Heart right ventricle (tissue), 16 donors: ENCODE measurements at regions of chr10 and their contacts with region 1.

Region 1: GRCh38 chr10:125060826-125061556 is 99.4 kb downstream of the CTBP2 start:
- DNase-seq: peak; percentile 84 to 86
- ATAC-seq: peak; percentile 51 to 77 (median 68)
- H3K4me3 ChIP-seq: peak overlapping the region in 7 of 10 donors; percentile 4 to 36 (median 29)
- H3K27ac ChIP-seq: peak overlapping the region; percentile 2 to 92 (median 70)
- H3K4me1 ChIP-seq: peaks cover 65 to 100% (median 100%) of the 10 kb centered on the region in 9 donors
- H3K27me3 ChIP-seq: no peaks in the 10 kb centered on the region
- CTCF ChIP-seq: peak; percentile 73 to 94 (median 84)

Region 2: DNA sequence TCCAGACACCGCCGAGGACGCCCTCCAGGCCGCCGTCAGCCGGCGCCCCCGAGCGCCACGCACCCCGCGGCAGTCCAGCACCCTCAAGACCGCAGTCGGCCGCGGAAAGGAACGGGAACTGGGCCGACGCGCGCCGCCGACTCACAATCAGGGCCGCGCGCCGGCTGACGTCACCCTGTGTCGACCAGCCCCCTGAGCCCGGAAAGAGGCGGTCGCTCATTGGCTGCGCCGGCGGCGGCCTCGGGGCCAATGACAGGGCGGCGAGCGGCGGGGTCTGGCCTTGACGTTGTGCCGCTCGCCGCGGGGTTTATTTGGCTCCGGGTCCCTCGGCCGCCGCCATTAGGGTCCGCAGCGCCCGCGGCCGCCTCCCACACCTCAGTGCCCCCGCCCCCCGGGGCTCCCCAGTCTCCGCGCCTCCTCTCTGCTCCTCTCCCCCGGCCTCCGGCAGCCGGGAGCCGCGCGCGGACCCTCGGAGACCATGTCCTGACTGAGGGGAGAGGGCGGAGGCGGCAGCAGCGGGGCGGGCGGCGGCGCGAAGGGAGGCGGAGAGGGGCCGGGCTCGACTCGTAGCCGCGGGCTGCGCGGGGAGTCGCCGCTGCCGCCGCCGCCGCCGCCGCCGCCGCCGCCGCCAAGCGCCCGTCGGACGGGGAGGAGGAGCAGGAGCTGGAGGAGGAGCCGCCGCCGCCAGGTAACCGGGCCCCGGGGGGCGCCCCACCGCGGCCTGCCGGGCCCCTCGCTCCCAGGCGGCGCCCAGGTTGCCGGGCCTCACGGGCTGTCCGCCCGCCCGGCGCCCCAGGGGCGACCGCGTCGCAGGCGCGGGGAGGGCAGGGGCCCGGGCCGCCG is 144.2 kb before region 1 on chr10:
- intact Hi-C with region 1: loop called in 1 of 10 experiments (anchors 10 kb)
- DNase-seq: peak; percentile 98 to 99
- ATAC-seq: peak; percentile 98 to 99 (median 99)
- H3K4me3 ChIP-seq: peak overlapping the region; percentile 74 to 92 (median 86)
- H3K27ac ChIP-seq: peak overlapping the region; percentile 86 to 99 (median 96)
- H3K4me1 ChIP-seq: peaks cover 7 to 55% (median 46%) of the 10 kb centered on the region in 9 donors
- H3K27me3 ChIP-seq: no peaks in the 10 kb centered on the region
- CTCF ChIP-seq: peak in 1 of 9 donors; percentile 4

Region 3: DNA sequence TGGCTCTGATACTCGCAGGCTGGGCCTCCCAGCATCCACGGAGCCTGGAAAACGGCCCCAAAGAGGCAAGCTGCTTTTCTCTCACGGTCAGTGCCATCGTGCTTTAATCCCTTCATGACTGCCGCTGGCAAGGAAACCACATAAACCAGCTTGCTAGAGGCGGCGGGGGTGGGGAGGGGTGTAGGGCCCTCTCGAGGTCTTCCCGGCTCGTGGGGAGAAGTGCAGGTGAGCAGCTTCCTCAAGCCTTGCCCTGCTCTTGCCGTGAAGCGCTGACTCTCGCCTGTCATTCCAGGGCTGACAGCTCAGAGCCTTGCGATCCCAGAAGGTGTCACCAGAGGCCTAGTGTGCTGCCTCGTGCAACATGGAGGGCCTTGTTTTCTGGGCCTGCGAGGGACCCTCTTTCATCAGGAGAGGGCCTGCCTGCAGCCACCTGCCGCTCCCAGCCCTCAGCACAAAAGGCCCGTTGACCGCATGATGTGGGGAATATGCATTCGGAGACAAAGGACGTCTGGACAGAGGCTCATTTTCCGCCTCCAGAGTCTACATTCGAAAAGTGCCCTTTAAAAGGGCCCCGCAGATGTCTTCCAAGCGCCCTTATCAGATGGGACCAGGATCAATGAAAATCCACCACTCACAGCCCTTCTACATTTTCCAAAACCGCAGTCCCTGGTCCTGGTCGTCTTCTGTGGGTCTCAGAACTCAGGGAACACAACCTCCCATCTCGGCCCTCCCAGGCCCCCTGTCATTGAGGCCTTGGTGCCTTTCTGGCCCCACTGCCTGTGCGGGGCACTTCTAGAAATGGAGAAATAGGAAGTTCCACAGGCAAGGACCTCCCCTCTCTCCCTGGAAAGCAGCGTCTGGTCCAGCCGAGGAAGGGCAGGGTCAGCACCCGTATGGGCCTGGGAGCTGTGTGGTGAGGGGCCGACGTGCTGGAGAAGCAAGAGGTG is 60.4 kb before region 1 on chr10:
- intact Hi-C with region 1: loop called in 4 of 10 experiments (anchors 5 to 10 kb)
- DNase-seq: peak in 1 of 2 donors; percentile 18
- ATAC-seq: peak in 6 of 8 donors; percentile 23 to 60 (median 36)
- H3K4me3 ChIP-seq: no peak overlapping the region
- H3K27ac ChIP-seq: peak overlapping the region in 9 of 10 donors; percentile 12 to 81 (median 71)
- H3K4me1 ChIP-seq: peaks cover 30 to 56% (median 42%) of the 10 kb centered on the region in 9 donors
- H3K27me3 ChIP-seq: no peaks in the 10 kb centered on the region
- CTCF ChIP-seq: peak in 6 of 9 donors; percentile 5 to 45 (median 28)

Region 4: DNA sequence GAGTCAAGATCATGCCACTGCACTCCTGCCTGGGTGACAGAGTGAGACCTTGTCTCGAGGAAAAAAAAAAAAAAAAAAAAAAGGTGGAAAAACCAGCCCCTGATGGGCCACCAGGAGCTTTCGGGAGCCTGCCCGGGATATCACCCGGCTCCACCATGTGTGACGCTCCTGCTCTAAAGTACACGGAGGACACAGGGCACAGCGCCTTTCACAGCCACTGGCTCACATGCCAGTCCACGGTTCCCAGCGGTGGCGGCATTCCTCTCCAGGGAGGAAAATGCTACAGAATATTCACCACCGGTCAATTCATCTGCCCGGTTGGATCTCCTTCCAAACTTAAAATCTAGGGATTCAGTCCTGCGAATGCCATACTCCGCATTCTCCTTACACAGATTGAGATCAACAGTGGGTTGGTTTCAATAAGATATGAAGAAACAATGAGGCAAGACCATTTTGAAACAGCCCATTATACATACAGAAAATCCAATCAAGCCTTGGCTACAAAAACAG is 18.2 kb after region 1 on chr10:
- intact Hi-C with region 1: loop called in 1 of 10 experiments (anchors 2 kb)
- DNase-seq: peak in 1 of 2 donors; percentile 57
- ATAC-seq: peak in 4 of 8 donors; percentile 20 to 80 (median 60)
- H3K4me3 ChIP-seq: no peak overlapping the region
- H3K27ac ChIP-seq: peak overlapping the region in 9 of 10 donors; percentile 20 to 73 (median 54)
- H3K4me1 ChIP-seq: peaks cover 16 to 86% (median 41%) of the 10 kb centered on the region in 9 donors
- H3K27me3 ChIP-seq: no peaks in the 10 kb centered on the region
- CTCF ChIP-seq: no peak

Region 5: DNA sequence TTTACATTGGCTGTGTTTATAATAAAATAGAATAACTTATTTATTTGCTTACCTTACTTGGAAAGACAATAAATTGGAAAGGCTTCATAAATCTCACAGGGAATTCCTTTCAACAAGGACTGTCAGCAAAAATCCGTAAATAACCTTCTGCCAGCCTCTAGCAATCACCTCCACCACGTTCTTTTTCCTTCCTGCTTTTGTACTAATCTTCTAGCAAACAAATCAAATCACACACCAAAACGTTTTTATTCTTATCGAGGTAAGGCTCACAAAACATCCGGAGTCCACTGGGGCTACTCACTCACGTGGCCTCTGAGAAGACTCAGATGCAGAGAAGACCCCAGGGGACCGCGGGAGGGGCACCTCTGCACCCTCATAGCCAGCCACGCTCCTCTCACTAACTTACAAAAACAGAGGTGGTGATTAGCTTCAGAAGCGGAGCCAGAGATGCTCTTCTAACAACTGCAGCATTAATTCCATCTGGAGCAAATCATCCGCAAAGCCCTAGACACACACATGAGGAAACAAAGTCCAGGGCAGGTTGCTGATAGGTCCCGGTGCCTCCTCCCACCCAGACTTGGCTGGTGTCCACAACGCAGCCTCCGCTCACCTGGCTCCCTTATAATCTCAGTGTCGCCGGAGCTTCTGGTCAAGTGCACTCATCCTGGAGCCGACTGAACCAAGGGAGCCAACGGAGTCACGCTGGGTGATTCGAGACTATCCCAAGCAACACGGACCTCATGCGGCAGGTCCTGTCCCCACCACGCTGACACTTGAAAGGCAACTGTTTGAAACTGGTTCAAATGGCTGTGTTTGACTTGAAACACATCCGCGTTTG is 76.8 kb after region 1 on chr10:
- intact Hi-C with region 1: loop called in 1 of 10 experiments (anchors 5 kb)
- DNase-seq: no peak
- ATAC-seq: peak in 7 of 8 donors; percentile 15 to 57 (median 43)
- H3K4me3 ChIP-seq: no peak overlapping the region
- H3K27ac ChIP-seq: peak overlapping the region in 6 of 10 donors; percentile 2 to 65 (median 14)
- H3K4me1 ChIP-seq: peaks cover 24 to 81% (median 50%) of the 10 kb centered on the region in 9 donors
- H3K27me3 ChIP-seq: no peaks in the 10 kb centered on the region
- CTCF ChIP-seq: peak in 3 of 9 donors; percentile 8 to 35 (median 23)